B cell (primary cell): ENCODE measurements at regions of chr5 and their contacts with region 1.

Region 1: DNA sequence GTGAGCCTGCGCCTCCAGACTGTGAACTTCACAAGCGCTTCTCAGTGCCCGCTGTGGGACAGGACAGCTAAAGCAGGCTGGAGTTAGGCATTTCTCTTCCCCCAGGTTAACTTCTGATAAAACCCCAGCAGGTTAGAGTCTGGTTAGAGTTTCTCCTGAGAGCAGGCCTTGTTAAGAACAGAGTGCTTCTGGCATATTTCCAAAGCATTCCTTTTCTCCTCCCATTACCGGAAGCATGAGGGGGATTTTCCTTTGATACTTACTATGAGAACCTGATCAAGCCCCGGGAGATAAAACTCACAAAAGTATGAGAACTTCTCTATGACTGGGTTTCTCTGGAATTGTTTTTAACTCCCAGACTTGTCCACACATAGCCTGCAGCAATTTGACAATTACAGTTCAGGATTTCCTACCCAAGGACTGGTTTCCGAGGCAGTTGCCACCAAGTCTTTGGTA is 77.4 kb upstream of the MAST4 start:
- DNase-seq: no peak
- ATAC-seq: no peak
- H3K4me3 ChIP-seq: no peak overlapping the region
- H3K4me3 Mint-ChIP-seq: no peak overlapping the region
- H3K27ac ChIP-seq: no peak overlapping the region
- H3K27ac Mint-ChIP-seq: no peak overlapping the region
- H3K4me1 ChIP-seq: peaks cover 35 to 36% of the 10 kb centered on the region in 2 donors
- H3K4me1 Mint-ChIP-seq: peaks cover 39% of the 10 kb centered on the region
- H3K27me3 ChIP-seq: no peaks in the 10 kb centered on the region
- H3K27me3 Mint-ChIP-seq: no peaks in the 10 kb centered on the region
- CTCF ChIP-seq: no peak

Region 2: GRCh38 chr5:66144074-66144833 is 374.5 kb before region 1 on chr5 and contains the start of gene SREK1:
- CTCF ChIA-PET with region 1: no interaction called
- POLR2A ChIA-PET with region 1: no interaction called
- intact Hi-C with region 1: loop called (anchors 10 kb)
- DNase-seq: peak; percentile 93
- ATAC-seq: peak; percentile 84
- H3K4me3 ChIP-seq: peak within 1 kb of the TSS; percentile 76 to 99 (median 95)
- H3K4me3 Mint-ChIP-seq: peak within 1 kb of the TSS; percentile 96
- H3K27ac ChIP-seq: peak within 1 kb of the TSS; percentile 97 to 99
- H3K27ac Mint-ChIP-seq: peak within 1 kb of the TSS; percentile 100
- H3K4me1 ChIP-seq: peaks cover 9 to 16% of the 10 kb centered on the region in 2 donors
- H3K4me1 Mint-ChIP-seq: peaks cover 29% of the 10 kb centered on the region
- H3K27me3 ChIP-seq: no peaks in the 10 kb centered on the region
- H3K27me3 Mint-ChIP-seq: no peaks in the 10 kb centered on the region
- CTCF ChIP-seq: no peak
- total RNA-seq, gene SREK1: 116 and 117 TPM in 2 replicates

Region 3: GRCh38 chr5:66553916-66554575 is 35.3 kb after region 1 on chr5:
- CTCF ChIA-PET with region 1: interaction called, 3 read pairs
- POLR2A ChIA-PET with region 1: interaction called, 3 read pairs
- intact Hi-C with region 1: loop called (anchors 1 kb)
- DNase-seq: peak; percentile 93
- ATAC-seq: peak; percentile 94
- H3K4me3 ChIP-seq: peak overlapping the region in 1 of 5 experiments; percentile 1
- H3K4me3 Mint-ChIP-seq: peak overlapping the region; percentile 65
- H3K27ac ChIP-seq: peak overlapping the region; percentile 69 to 75
- H3K27ac Mint-ChIP-seq: peak overlapping the region; percentile 93
- H3K4me1 ChIP-seq: peaks cover 28 to 34% of the 10 kb centered on the region in 2 donors
- H3K4me1 Mint-ChIP-seq: peaks cover 39% of the 10 kb centered on the region
- H3K27me3 ChIP-seq: peaks cover 0 to 2% (median 0%) of the 10 kb centered on the region in 4 experiments
- H3K27me3 Mint-ChIP-seq: no peaks in the 10 kb centered on the region
- CTCF ChIP-seq: no peak

Region 4: DNA sequence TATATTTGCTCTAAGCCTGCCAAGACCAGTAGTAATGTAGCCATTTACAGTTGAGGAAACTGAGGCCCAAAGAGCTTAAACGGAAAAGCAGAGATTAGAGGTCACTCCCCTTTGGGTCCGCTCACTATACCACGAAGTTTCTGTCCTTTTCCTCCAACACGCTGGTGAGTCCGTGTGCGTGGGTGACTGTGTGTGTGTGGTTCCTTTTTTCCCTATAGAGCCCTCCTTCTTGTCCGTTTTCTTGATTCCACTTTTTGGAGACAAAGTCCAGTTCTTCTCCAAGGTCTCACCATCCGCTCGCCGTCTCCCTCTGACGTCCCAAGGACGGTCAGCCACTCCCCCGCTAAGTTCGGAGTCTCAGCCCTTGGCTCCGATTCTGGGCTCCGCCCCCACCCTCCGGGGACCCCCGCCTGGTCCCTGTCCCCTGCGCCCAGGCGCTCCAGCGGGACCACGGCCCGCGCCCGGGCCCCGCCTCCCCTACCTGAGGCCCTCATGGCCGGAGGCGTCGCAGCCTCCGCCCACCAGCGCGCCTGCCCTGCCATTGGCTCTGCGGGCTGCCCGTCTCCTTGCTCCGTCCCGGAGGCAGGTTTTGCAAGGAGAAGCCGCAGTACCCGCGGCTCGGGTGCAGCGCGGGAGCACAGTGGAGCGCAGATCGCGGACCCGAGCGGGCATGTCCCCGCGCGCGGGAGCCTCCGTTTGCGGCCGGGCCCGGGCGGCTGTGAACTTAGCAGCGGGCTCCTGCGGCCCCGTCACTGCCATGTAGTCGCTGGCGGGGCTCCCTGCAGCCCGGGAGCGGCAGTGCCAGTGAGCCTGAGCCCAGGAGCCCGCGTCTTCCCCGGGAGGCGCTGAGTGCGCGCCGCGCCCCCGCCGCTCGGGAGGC is 77.3 kb after region 1 on chr5 and contains the start of gene MAST4:
- CTCF ChIA-PET with region 1: interaction called, 4 read pairs
- POLR2A ChIA-PET with region 1: no interaction called
- intact Hi-C with region 1: loop called (anchors 2 kb)
- DNase-seq: peak; percentile 85
- ATAC-seq: peak; percentile 94
- H3K4me3 ChIP-seq: peak within 1 kb of the TSS; percentile 52 to 79 (median 59)
- H3K4me3 Mint-ChIP-seq: peak within 1 kb of the TSS; percentile 91
- H3K27ac ChIP-seq: no peak within 1 kb of the TSS
- H3K27ac Mint-ChIP-seq: peak within 1 kb of the TSS; percentile 2
- H3K4me1 ChIP-seq: peaks cover 14 to 16% of the 10 kb centered on the region in 2 donors
- H3K4me1 Mint-ChIP-seq: peaks cover 23% of the 10 kb centered on the region
- H3K27me3 ChIP-seq: peaks cover 0 to 48% (median 32%) of the 10 kb centered on the region in 4 experiments
- H3K27me3 Mint-ChIP-seq: peaks cover 45% of the 10 kb centered on the region
- CTCF ChIP-seq: no peak
- total RNA-seq, gene MAST4: 56.0 and 57.1 TPM in 2 replicates